CD14-positive monocyte (primary cell): ENCODE measurements at regions of chr2 and their contacts with region 1.

Region 1: GRCh38 chr2:64214281-64215115 is 70.3 kb upstream of the PELI1 start:
- DNase-seq: peak in 1 of 3 donors; percentile 64
- H3K4me3 ChIP-seq: peak overlapping the region in 1 of 3 experiments; percentile 39
- H3K4me3 Mint-ChIP-seq: peak overlapping the region in 1 of 2 donors; percentile 28
- H3K27ac ChIP-seq: peak overlapping the region in 1 of 2 donors; percentile 97
- H3K27ac Mint-ChIP-seq: peak overlapping the region; percentile 92 to 97 (median 96)
- H3K4me1 ChIP-seq: peaks cover 52 to 66% of the 10 kb centered on the region in 2 donors
- H3K4me1 Mint-ChIP-seq: peaks cover 53% of the 10 kb centered on the region
- H3K27me3 ChIP-seq: no peaks in the 10 kb centered on the region
- H3K27me3 Mint-ChIP-seq: no peaks in the 10 kb centered on the region
- CTCF ChIP-seq: no peak

Region 2: GRCh38 chr2:63594660-63595059 is 619.8 kb before region 1 on chr2:
- intact Hi-C with region 1: no loop called
- DNase-seq: no peak
- H3K4me3 ChIP-seq: no peak overlapping the region
- H3K4me3 Mint-ChIP-seq: no peak overlapping the region
- H3K27ac ChIP-seq: no peak overlapping the region
- H3K27ac Mint-ChIP-seq: no peak overlapping the region
- H3K4me1 ChIP-seq: peaks cover 27 to 28% of the 10 kb centered on the region in 2 donors
- H3K4me1 Mint-ChIP-seq: peaks cover 27% of the 10 kb centered on the region
- H3K27me3 ChIP-seq: no peaks in the 10 kb centered on the region
- H3K27me3 Mint-ChIP-seq: peaks cover 0 to 1% (median 0%) of the 10 kb centered on the region in 3 donors
- CTCF ChIP-seq: no peak

Region 3: GRCh38 chr2:63814114-63814513 is 400.4 kb before region 1 on chr2:
- intact Hi-C with region 1: no loop called
- DNase-seq: no peak
- H3K4me3 ChIP-seq: no peak overlapping the region
- H3K4me3 Mint-ChIP-seq: no peak overlapping the region
- H3K27ac ChIP-seq: no peak overlapping the region
- H3K27ac Mint-ChIP-seq: peak overlapping the region in 1 of 7 donors; percentile 2
- H3K4me1 ChIP-seq: no peaks in the 10 kb centered on the region
- H3K4me1 Mint-ChIP-seq: peaks cover 16% of the 10 kb centered on the region
- H3K27me3 ChIP-seq: no peaks in the 10 kb centered on the region
- H3K27me3 Mint-ChIP-seq: no peaks in the 10 kb centered on the region
- CTCF ChIP-seq: no peak

Region 4: DNA sequence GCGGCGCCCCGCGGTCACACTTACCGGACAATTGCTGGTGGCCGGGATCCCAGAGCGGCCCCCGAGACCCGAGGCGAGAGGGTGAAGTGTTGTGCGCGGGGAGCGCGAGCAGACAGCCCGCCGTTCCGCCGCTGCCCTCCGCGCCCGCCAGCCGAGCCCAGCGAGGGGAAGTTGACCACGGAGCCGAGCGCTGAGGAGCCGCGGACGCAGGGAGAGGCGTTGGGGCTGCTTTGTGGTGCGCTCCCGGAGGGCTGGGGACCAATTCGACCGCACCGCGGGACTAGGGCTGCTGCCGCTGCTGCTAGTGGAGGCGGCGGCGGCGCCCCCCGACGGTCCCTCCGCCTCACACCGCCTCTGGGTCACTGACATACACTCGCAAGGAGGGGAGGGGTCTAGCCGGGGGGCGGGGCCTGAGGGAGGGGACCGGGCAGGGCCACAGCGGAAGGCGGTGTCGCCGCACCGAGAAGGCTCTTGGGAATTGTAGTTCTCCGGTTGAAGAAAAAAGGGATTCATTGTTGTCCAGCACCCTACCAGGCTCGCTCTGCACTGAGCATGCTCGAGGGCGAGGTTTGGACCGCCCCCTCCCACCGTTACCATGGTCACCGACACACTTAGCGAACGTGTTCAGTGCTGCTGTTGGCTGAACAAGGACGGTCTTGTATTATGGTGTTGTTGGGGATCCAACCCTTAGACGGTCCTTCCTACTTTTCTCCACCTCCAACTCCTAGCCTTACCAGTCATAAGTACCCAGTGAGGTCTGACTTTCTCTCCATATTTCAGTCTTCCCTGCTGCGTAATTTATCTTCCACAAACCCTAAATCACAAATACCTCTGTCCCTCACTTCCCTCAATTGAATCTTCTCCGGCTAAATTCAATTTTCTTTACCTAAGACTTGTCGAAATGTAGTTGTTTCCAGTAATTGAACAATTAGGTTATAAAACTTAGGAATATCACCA is 70.2 kb before region 1 on chr2 and contains the start of gene PELI1:
- intact Hi-C with region 1: loop called (anchors 5 kb)
- DNase-seq: peak; percentile 93 to 95 (median 95)
- H3K4me3 ChIP-seq: peak within 1 kb of the TSS; percentile 77 to 99 (median 88)
- H3K4me3 Mint-ChIP-seq: peak within 1 kb of the TSS; percentile 95 to 99
- H3K27ac ChIP-seq: peak within 1 kb of the TSS; percentile 79 to 88
- H3K27ac Mint-ChIP-seq: peak within 1 kb of the TSS; percentile 90 to 97 (median 94)
- H3K4me1 ChIP-seq: peaks cover 14 to 41% of the 10 kb centered on the region in 2 donors
- H3K4me1 Mint-ChIP-seq: peaks cover 32% of the 10 kb centered on the region
- H3K27me3 ChIP-seq: no peaks in the 10 kb centered on the region
- H3K27me3 Mint-ChIP-seq: peaks cover 0 to 3% (median 0%) of the 10 kb centered on the region in 3 donors
- CTCF ChIP-seq: no peak
- polyA plus RNA-seq, gene PELI1: 44.7 to 106 (median 53.6) TPM

Region 5: GRCh38 chr2:64192125-64192479 is 22.4 kb before region 1 on chr2:
- intact Hi-C with region 1: loop called in 1 of 2 experiments (anchors 2 kb)
- DNase-seq: peak; percentile 80 to 95 (median 95)
- H3K4me3 ChIP-seq: peak overlapping the region in 2 of 3 experiments; percentile 16 to 50
- H3K4me3 Mint-ChIP-seq: peak overlapping the region; percentile 17 to 60
- H3K27ac ChIP-seq: peak overlapping the region; percentile 75 to 90
- H3K27ac Mint-ChIP-seq: peak overlapping the region; percentile 91 to 99 (median 97)
- H3K4me1 ChIP-seq: peaks cover 59 to 66% of the 10 kb centered on the region in 2 donors
- H3K4me1 Mint-ChIP-seq: peaks cover 68% of the 10 kb centered on the region
- H3K27me3 ChIP-seq: no peaks in the 10 kb centered on the region
- H3K27me3 Mint-ChIP-seq: peaks cover 0 to 3% (median 2%) of the 10 kb centered on the region in 3 donors
- CTCF ChIP-seq: no peak

Region 6: DNA sequence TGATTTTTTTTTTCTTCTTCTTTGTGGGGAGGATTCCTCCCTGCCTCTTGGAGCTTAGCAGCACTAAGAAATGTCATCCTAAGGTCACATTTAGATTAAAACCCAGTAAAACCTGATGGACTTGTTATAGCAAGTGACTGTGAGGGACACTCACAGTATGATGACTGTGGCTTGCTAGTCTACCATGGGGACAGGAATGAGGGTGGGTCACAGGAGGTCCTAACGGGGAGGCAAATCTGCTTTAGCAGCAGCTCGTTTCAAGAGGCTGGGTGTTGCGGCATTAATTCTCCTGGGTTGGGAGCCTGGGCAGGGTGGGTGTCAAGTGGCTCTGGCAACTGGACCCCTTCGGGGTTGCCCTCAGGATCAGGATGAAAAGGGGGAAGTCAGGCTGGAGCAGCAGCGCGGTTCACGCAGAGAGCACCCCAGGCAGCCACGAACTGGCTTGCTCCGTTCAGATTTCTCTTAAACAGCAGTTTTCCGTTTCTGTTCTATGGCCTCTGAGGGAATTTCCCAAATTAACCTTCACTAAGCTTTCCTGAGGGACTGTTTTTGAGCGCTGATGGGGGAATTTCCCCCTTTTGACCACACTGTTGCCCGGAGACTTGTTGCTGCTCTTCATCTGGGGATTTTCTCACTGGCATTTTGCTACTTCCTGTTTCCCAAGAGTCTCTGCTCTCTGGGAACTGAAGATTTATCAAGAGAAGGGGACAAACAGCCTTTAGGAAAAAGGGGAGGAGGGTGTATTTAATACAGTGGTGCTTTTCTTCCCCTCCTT is 10.5 kb before region 1 on chr2:
- intact Hi-C with region 1: loop called in 1 of 2 experiments (anchors 1 kb)
- DNase-seq: peak; percentile 84 to 99 (median 92)
- H3K4me3 ChIP-seq: peak overlapping the region in 2 of 3 experiments; percentile 10 to 57
- H3K4me3 Mint-ChIP-seq: peak overlapping the region; percentile 68 to 87
- H3K27ac ChIP-seq: peak overlapping the region; percentile 90 to 92
- H3K27ac Mint-ChIP-seq: peak overlapping the region; percentile 94 to 99 (median 97)
- H3K4me1 ChIP-seq: peaks cover 21 to 32% of the 10 kb centered on the region in 2 donors
- H3K4me1 Mint-ChIP-seq: peaks cover 27% of the 10 kb centered on the region
- H3K27me3 ChIP-seq: no peaks in the 10 kb centered on the region
- H3K27me3 Mint-ChIP-seq: peaks cover 0 to 2% (median 0%) of the 10 kb centered on the region in 3 donors
- CTCF ChIP-seq: no peak

Region 7: DNA sequence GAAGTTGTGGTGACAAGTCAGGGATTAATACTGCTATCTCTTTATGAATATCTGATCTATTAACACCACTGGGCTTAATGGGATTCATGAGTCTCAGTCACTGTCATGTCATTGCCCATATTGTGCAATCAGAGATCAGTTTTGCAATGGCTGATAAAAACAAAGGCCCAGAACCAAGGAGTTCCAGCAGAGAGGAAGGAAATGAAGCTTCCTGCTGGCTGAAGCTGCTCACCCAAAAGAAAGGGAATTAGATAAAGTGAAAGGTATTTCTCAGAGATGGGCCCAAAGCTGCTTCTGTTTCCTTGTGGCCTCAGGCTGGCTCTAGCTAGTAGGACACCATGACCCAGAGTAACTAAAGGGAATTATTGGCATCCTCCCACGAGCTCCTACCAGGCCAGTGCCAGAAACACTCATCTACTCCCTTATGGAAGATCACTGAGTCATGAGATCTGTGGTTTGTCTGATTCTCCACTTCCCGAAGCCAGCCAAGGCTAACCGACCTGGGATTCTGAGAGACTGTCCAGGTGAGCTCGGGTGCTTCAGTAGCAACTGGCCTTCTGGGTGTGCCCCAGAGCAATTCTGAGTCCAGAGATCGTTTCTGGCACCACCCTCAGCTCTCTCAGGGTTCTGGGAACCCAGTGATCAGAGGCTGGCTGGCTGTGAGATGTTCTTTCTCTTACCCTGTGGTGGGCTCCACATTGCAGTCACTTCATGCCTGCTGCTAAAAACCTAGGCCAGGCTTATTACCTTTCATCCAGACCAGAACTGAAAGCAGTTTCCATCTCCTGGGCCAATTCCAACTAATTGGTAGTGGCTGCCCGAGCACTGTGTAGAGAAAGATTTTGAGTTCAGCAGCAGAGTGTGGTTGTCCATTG is 59.3 kb after region 1 on chr2:
- intact Hi-C with region 1: loop called in 1 of 2 experiments (anchors 5 kb)
- DNase-seq: peak; percentile 87 to 96 (median 94)
- H3K4me3 ChIP-seq: peak overlapping the region; percentile 52 to 87 (median 53)
- H3K4me3 Mint-ChIP-seq: peak overlapping the region; percentile 79 to 90
- H3K27ac ChIP-seq: peak overlapping the region; percentile 87 to 96
- H3K27ac Mint-ChIP-seq: peak overlapping the region; percentile 94 to 98 (median 96)
- H3K4me1 ChIP-seq: peaks cover 64 to 70% of the 10 kb centered on the region in 2 donors
- H3K4me1 Mint-ChIP-seq: peaks cover 68% of the 10 kb centered on the region
- H3K27me3 ChIP-seq: no peaks in the 10 kb centered on the region
- H3K27me3 Mint-ChIP-seq: peaks cover 0 to 2% (median 0%) of the 10 kb centered on the region in 3 donors
- CTCF ChIP-seq: no peak